Posterior cingulate gyrus (tissue), 11 donors: ENCODE measurements at regions of chr3 and their contacts with region 1.

Region 1: GRCh38 chr3:157572559-157573270 is 69.5 kb upstream of the VEPH1 start:
- DNase-seq: peak in 1 of 10 donors; percentile 17

Region 2: GRCh38 chr3:157436583-157437291 is 136.0 kb before region 1 on chr3 and contains the start of gene PTX3:
- intact Hi-C with region 1: no loop called
- DNase-seq: peak in 3 of 10 donors; percentile 7 to 50 (median 8)

Region 3: GRCh38 chr3:157460253-157460652 is 112.5 kb before region 1 on chr3:
- intact Hi-C with region 1: no loop called
- DNase-seq: no peak

Region 4: DNA sequence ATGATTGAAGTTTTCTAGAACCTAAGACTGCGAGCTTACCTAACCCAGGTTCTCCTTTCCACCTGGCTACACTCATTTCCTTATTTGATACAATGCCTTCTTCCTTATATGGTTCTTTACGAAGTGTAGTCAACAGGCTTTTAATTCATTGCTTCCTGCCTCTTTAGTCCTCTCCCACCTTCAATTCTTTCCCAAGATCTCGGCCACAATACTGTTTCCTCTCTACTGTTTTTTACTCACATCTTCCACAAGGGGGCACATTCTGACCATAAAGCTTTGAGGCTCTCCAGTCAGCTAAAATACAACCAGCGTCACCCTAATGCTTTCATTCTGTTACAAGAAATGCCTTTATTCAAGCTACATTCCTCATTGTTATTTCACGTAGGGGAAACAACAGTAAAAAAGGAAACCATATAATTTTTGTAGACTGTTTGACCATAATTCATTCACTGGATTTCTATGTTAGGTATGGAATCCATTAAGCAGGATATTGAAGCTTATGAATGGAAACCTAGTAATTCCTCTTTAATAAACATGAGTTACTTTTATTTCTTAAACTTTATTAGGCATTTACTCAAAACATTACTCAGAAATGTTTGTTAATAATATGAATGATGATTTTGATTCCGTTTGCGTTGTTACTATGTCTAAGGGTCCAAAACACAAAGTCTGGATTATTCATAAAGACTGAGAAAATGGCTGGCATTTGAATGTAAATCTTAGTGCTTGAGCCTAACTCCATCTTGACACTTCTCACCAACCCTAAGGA is 40.0 kb before region 1 on chr3:
- intact Hi-C with region 1: loop called (anchors 1 kb)
- DNase-seq: peak in 1 of 10 donors; percentile 11